B cell (primary cell): ENCODE measurements at regions of chr6 and their contacts with region 1.

Region 1: GRCh38 chr6:28807682-28808280 is 116.0 kb downstream of the TRIM27 start:
- DNase-seq: peak; percentile 22
- ATAC-seq: no peak
- H3K4me3 ChIP-seq: no peak overlapping the region
- H3K4me3 Mint-ChIP-seq: no peak overlapping the region
- H3K27ac ChIP-seq: no peak overlapping the region
- H3K27ac Mint-ChIP-seq: no peak overlapping the region
- H3K4me1 ChIP-seq: peaks cover 0 to 6% of the 10 kb centered on the region in 2 donors
- H3K4me1 Mint-ChIP-seq: no peaks in the 10 kb centered on the region
- H3K27me3 ChIP-seq: peaks cover 0 to 75% (median 64%) of the 10 kb centered on the region in 4 experiments
- H3K27me3 Mint-ChIP-seq: peaks cover 67% of the 10 kb centered on the region
- CTCF ChIP-seq: no peak

Region 2: GRCh38 chr6:28729501-28730402 is 78.0 kb before region 1 on chr6:
- CTCF ChIA-PET with region 1: no interaction called
- POLR2A ChIA-PET with region 1: no interaction called
- intact Hi-C with region 1: loop called (anchors 5 kb)
- DNase-seq: no peak
- ATAC-seq: no peak
- H3K4me3 ChIP-seq: peak overlapping the region in 2 of 5 experiments; percentile 53 to 57
- H3K4me3 Mint-ChIP-seq: peak overlapping the region; percentile 80
- H3K27ac ChIP-seq: no peak overlapping the region
- H3K27ac Mint-ChIP-seq: no peak overlapping the region
- H3K4me1 ChIP-seq: peaks cover 9 to 18% of the 10 kb centered on the region in 2 donors
- H3K4me1 Mint-ChIP-seq: peaks cover 16% of the 10 kb centered on the region
- H3K27me3 ChIP-seq: peaks cover 0 to 65% (median 50%) of the 10 kb centered on the region in 4 experiments
- H3K27me3 Mint-ChIP-seq: peaks cover 79% of the 10 kb centered on the region
- CTCF ChIP-seq: no peak

Region 3: DNA sequence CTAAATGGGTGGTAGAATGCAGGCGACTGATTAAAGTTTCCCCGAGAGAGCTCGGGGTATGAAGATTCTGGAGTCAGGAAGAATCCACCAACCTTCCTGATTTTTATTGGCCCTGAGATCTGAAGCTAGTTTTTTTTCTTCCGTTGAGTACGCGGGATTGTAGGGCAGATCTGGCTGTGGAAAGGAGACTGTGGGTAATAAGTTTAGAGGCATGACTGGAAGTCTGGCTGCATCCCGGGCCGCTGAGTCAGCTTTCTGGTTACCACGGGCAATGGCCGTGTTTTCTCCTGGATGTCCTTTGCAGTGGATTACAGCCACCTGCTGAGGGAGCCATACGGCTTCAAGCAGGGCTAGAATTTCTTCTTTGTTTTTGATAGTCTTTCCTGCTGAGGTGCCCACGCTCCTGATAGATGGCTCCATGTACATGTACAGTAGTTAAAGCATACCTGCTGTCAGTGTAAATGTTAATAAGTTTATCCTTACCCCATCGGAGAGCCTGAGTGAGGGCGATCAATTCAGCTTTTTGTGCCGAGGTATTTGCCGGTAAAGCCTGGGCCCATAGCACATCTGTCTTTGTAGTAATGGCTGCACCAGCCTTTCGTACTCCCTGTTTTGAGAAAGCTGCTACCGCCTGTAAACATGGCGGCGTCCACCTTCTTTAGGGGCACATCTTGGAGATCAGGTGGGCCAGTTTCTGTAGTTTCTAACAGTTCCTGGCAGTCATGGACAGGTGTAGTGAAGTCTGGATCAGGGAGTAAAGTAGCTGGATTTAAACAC is 38.0 kb before region 1 on chr6:
- CTCF ChIA-PET with region 1: no interaction called
- POLR2A ChIA-PET with region 1: no interaction called
- intact Hi-C with region 1: loop called (anchors 5 kb)
- DNase-seq: no peak
- ATAC-seq: no peak
- H3K4me3 ChIP-seq: no peak overlapping the region
- H3K4me3 Mint-ChIP-seq: no peak overlapping the region
- H3K27ac ChIP-seq: no peak overlapping the region
- H3K27ac Mint-ChIP-seq: no peak overlapping the region
- H3K4me1 ChIP-seq: peaks cover 0 to 9% of the 10 kb centered on the region in 2 donors
- H3K4me1 Mint-ChIP-seq: peaks cover 3% of the 10 kb centered on the region
- H3K27me3 ChIP-seq: peaks cover 0 to 92% (median 80%) of the 10 kb centered on the region in 4 experiments
- H3K27me3 Mint-ChIP-seq: peaks cover 92% of the 10 kb centered on the region
- CTCF ChIP-seq: no peak